ENCODE measurements at regions of chr1 and their contacts with region 1.

Region 1: DNA sequence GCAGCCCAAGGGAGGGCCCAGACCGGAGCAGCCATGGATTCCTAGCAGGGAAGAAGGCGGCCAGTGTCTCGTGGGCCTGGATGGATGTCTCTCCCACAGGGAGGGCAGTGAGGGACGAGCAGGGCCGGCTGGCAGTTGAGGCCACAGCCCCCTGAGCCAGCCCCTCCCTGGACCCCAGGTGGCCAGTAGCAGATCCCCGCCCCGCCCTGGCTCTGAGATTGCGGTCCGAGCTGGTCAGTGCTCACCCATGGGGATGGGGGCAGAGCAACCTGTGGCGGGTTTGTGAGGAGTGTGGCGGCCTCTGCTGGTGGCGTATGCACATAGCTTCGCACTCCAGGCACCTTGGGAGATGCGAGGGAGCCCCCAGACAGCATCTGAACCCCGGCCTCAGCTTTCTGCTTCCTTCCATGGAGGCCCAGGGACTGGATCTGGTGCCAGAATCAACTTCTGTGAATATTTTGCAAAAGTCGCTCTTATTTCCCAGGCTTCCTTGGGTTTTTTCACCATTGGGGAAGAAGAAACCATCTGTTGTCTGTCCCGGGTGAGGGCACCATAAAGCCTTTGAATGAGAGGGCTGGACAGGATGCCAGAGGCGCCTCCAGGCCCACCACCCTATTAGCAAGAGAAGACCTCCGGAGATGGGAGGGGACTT is 8.4 kb upstream of the KCNN3 start:
- DNase-seq: peak; percentile 73
- H3K4me3 ChIP-seq: no peak overlapping the region
- H3K27ac ChIP-seq: no peak overlapping the region
- H3K4me1 ChIP-seq: no peaks in the 10 kb centered on the region
- H3K27me3 ChIP-seq: no peaks in the 10 kb centered on the region
- CTCF ChIP-seq: peak; percentile 54 to 91 (median 86)
- POLR2A ChIP-seq: no peak

Region 2: GRCh38 chr1:154479764-154480421 is 398.6 kb before region 1 on chr1:
- intact Hi-C with region 1: loop called (anchors 2 kb)
- DNase-seq: peak; percentile 59
- H3K4me3 ChIP-seq: no peak overlapping the region
- H3K27ac ChIP-seq: no peak overlapping the region
- H3K4me1 ChIP-seq: no peaks in the 10 kb centered on the region
- H3K27me3 ChIP-seq: no peaks in the 10 kb centered on the region
- CTCF ChIP-seq: peak; percentile 56 to 92 (median 86)
- POLR2A ChIP-seq: no peak

Region 3: GRCh38 chr1:154669464-154670282 is 208.8 kb before region 1 on chr1:
- intact Hi-C with region 1: loop called (anchors 2 kb)
- DNase-seq: peak; percentile 65
- H3K4me3 ChIP-seq: no peak overlapping the region
- H3K27ac ChIP-seq: no peak overlapping the region
- H3K4me1 ChIP-seq: no peaks in the 10 kb centered on the region
- H3K27me3 ChIP-seq: no peaks in the 10 kb centered on the region
- CTCF ChIP-seq: peak; percentile 55 to 82 (median 70)
- POLR2A ChIP-seq: no peak

Region 4: DNA sequence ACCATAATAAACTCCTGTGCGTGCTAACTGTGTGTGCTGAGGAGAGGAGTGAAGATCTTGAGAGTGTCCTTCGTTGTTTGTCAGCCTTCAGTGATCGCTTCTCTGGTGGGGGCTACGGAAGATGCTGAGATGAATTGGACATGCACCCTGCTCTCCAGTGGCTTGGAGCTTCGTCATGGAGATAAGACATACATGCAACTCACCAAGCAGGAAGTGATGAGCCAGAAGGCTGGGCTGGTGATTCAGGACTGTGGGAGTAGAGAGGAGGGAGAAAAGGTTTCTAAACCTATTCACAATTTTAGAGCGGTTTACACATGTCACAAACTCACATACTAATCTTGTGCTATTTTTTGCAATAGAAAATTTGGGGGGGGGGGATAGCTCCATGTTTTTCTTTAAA is 141.7 kb before region 1 on chr1:
- intact Hi-C with region 1: no loop called
- DNase-seq: no peak
- H3K4me3 ChIP-seq: no peak overlapping the region
- H3K27ac ChIP-seq: no peak overlapping the region
- H3K4me1 ChIP-seq: no peaks in the 10 kb centered on the region
- H3K27me3 ChIP-seq: no peaks in the 10 kb centered on the region
- CTCF ChIP-seq: no peak
- POLR2A ChIP-seq: no peak

Region 5: DNA sequence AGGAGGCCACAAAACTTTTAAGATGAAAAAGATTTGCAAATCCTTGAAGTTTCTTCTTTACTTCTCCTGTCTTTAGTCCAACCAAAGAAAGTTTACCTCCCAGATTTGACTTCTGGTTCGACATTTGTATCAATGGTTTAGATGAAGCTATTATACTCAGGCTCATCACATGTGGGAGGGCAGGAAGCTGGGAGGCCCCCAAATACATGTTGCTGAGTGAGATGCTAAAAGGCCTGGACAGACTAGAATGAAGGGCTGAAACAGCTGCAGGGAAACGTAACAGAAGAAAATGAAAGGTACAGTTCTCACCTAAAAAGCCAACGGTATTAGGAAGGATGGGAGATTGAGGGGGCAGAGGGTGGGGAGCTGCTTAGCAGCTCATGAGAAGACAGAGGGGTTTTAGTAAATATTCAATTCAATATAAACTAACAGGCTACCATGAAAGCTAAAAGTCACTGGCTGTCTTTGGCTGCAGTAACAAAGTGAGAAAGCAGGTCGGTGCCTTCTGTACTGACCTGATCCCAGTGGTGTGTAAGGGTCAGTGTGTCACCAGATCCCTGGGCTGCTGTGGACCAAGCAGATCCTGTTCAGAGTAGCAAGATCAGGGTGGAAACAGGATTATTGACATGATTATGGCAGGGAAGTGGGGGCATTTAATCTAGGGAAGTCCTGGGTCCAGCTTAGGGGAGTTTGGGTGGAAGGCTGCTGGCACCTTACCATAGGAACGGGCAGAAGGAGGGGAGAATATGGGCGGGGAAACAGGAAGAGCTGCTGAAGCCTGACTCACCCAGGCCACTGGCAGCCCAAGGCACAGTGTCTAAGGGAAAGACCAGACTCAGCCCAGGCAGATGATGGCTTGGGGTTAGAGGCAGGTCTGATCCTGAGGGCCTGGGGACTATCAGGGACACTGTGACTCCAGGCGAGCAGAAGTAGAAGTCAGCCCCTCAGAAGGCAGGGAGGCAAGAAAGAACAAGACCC is 68.8 kb before region 1 on chr1:
- intact Hi-C with region 1: no loop called
- DNase-seq: peak; percentile 20
- H3K4me3 ChIP-seq: no peak overlapping the region
- H3K27ac ChIP-seq: peak overlapping the region in 1 of 2 donors; percentile 35
- H3K4me1 ChIP-seq: peaks cover 8% of the 10 kb centered on the region
- H3K27me3 ChIP-seq: no peaks in the 10 kb centered on the region
- CTCF ChIP-seq: no peak
- POLR2A ChIP-seq: peak; percentile 8

Measured in prostate gland (tissue), 2 donors.